Cardiac septum (tissue), 1 donor: ENCODE measurements at regions of chr19 and their contacts with region 1.

Region 1: GRCh38 chr19:6862673-6863078 is 24.7 kb upstream of the ADGRE1 start:
- DNase-seq: peak; percentile 87

Region 2: GRCh38 chr19:6632002-6632621 is 230.6 kb before region 1 on chr19:
- intact Hi-C with region 1: loop called (anchors 1 kb)
- DNase-seq: no peak

Region 3: GRCh38 chr19:6737284-6738046 is 125.2 kb before region 1 on chr19 and contains the start of gene GPR108:
- intact Hi-C with region 1: loop called (anchors 2 kb)
- DNase-seq: peak; percentile 100
- total RNA-seq, gene GPR108: 22.5 TPM